AG04449 (cell line): ENCODE measurements at regions of chr16 and their contacts with region 1.

Region 1: DNA sequence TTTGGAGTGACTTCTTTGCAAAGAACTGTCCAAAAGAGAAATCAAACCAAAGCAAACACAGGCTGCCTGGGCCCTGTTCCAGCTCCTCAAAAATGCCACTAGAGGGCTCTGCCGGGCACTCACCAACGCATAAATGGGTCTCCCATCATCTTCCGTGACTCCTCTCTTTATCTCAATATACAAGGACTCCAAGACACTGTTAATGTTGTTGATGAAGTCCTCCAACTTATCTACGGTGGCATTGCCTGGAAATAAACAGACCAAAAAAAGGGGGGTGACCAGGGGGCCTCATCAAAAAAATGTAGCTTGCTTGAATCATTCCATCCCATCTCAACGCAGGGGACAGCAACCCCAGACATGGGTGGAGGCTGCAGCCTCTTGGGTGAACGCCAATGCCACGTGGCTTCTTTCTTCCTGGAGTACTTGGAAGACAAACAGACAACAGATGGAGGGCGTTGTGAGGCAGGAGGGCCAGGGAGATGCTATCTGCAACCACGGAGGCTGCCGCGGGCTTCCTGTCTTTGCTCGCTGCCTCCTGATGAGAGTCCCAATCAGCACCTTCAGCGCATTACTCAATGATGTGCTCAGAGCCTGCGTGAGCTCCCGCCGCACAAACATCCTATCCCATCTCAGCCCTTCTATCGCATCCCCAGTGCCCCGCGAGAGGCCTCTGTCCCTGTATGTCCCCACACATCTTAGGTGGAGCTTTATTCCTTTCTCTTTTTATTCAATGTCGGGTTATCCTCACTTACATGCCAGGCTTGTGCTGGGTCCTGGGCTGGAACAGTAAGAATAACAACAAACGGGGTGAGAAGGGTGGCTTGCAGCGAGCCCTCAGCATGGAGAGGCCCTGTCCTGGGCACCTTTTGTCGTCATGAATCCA is 32.0 kb downstream of the KDM8 start:
- DNase-seq: peak; percentile 41
- H3K4me3 ChIP-seq: no peak overlapping the region; the same call in 1 of the 2 replicates
- CTCF ChIP-seq: peak; percentile 82

Region 2: DNA sequence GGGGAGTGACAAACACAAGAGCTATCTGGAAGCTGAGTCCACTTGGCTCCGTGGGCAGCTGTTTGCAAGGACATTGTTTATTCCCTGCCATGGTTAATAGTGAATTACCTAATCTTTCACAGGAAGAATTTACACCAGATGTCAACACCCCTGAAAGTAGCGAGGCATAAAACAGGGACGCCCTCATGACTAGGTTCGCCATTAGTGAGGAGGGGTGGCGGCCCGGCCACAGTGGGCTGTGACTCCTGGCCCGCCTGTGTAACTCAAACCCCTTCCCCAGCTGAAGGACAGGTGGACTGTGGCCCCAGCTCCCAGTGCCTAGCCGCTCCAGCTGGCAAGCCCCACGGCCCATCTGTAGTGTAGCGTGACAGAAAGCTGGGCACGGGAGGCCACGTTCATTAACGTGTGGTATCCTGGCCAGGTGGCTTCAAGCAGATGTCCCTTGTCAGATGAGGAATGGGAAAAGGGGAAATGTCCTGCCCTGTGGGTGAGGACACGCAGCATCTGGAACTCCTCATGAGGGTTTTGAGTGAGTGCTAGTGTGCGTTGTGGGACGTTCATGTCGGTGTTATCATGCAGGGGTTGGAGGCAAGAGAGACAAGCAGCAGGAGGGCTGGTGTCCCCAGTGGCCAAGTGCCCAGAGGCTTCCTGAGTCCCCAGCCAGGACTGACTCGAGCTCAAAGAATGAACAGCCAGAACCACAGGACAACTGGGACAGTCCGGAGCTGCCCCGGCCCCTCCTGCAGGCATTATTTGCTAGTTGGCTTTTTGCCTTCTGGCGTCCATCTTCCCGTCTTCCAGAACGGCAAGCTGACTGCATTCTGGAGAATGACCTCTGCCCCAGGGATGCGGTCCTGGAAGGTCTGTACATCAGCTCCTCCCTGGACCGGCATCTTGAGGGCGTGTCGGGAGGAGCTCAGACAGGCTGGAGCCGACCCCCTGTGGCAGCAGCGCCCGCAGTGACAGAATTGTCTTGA is 12.8 kb before region 1 on chr16:
- CTCF ChIA-PET with region 1: interaction called, 97 read pairs
- POLR2A ChIA-PET with region 1: no interaction called
- DNase-seq: no peak
- H3K4me3 ChIP-seq: no peak overlapping the region
- CTCF ChIP-seq: no peak

Region 3: GRCh38 chr16:27315277-27316037 is 80.2 kb after region 1 on chr16:
- CTCF ChIA-PET with region 1: interaction called, 17 read pairs
- POLR2A ChIA-PET with region 1: interaction called, 3 read pairs
- DNase-seq: no peak
- H3K4me3 ChIP-seq: peak overlapping the region; percentile 37
- CTCF ChIP-seq: no peak

Region 4: GRCh38 chr16:27347930-27348685 is 112.8 kb after region 1 on chr16:
- CTCF ChIA-PET with region 1: interaction called, 22 read pairs
- POLR2A ChIA-PET with region 1: no interaction called
- DNase-seq: no peak
- H3K4me3 ChIP-seq: no peak overlapping the region
- CTCF ChIP-seq: no peak

Region 5: GRCh38 chr16:27374804-27375425 is 139.6 kb after region 1 on chr16:
- CTCF ChIA-PET with region 1: interaction called, 355 read pairs
- POLR2A ChIA-PET with region 1: no interaction called
- DNase-seq: no peak
- H3K4me3 ChIP-seq: no peak overlapping the region
- CTCF ChIP-seq: peak; percentile 51